ENCODE measurements at regions of chr13 and their contacts with region 1.

Region 1: GRCh38 chr13:110915057-110915873 is at the start of gene ANKRD10:
- DNase-seq: peak; percentile 84 to 95 (median 92)
- ATAC-seq: peak; percentile 73
- H3K4me3 ChIP-seq: peak within 1 kb of the TSS; percentile 90 to 92
- H3K4me3 Mint-ChIP-seq: peak within 1 kb of the TSS; percentile 92
- H3K27ac ChIP-seq: peak within 1 kb of the TSS; percentile 85 to 89
- H3K27ac Mint-ChIP-seq: peak within 1 kb of the TSS; percentile 93
- H3K4me1 ChIP-seq: peaks cover 29% of the 10 kb centered on the region
- H3K4me1 Mint-ChIP-seq: peaks cover 46% of the 10 kb centered on the region
- H3K27me3 ChIP-seq: no peaks in the 10 kb centered on the region
- H3K27me3 Mint-ChIP-seq: no peaks in the 10 kb centered on the region
- CTCF ChIP-seq: peak; percentile 74
- total RNA-seq, gene ANKRD10: 71.5 to 75.0 TPM

Region 2: GRCh38 chr13:109786457-109787134 is 1128.7 kb before region 1 on chr13 and contains the start of gene IRS2:
- CTCF ChIA-PET with region 1: no interaction called
- POLR2A ChIA-PET with region 1: no interaction called
- intact Hi-C with region 1: loop called in 1 of 2 experiments (anchors 5 kb)
- DNase-seq: peak; percentile 84 to 95 (median 93)
- ATAC-seq: peak; percentile 84
- H3K4me3 ChIP-seq: peak within 1 kb of the TSS; percentile 45 to 76
- H3K4me3 Mint-ChIP-seq: peak within 1 kb of the TSS; percentile 87
- H3K27ac ChIP-seq: peak within 1 kb of the TSS in 1 of 2 experiments; percentile 63
- H3K27ac Mint-ChIP-seq: peak within 1 kb of the TSS; percentile 92
- H3K4me1 ChIP-seq: peaks cover 9% of the 10 kb centered on the region
- H3K4me1 Mint-ChIP-seq: peaks cover 24% of the 10 kb centered on the region
- H3K27me3 ChIP-seq: no peaks in the 10 kb centered on the region
- H3K27me3 Mint-ChIP-seq: no peaks in the 10 kb centered on the region
- CTCF ChIP-seq: no peak
- total RNA-seq, gene IRS2: 197 to 201 TPM

Region 3: GRCh38 chr13:110715395-110716235 is 199.7 kb before region 1 on chr13:
- CTCF ChIA-PET with region 1: no interaction called
- POLR2A ChIA-PET with region 1: interaction called, 27 read pairs
- intact Hi-C with region 1: loop called (anchors 1 kb)
- DNase-seq: peak; percentile 91 to 99 (median 95)
- ATAC-seq: peak; percentile 58
- H3K4me3 ChIP-seq: peak overlapping the region; percentile 68 to 100
- H3K4me3 Mint-ChIP-seq: peak overlapping the region; percentile 99
- H3K27ac ChIP-seq: peak overlapping the region; percentile 76 to 91
- H3K27ac Mint-ChIP-seq: peak overlapping the region; percentile 97
- H3K4me1 ChIP-seq: peaks cover 29% of the 10 kb centered on the region
- H3K4me1 Mint-ChIP-seq: peaks cover 34% of the 10 kb centered on the region
- H3K27me3 ChIP-seq: no peaks in the 10 kb centered on the region
- H3K27me3 Mint-ChIP-seq: no peaks in the 10 kb centered on the region
- CTCF ChIP-seq: no peak

Region 4: DNA sequence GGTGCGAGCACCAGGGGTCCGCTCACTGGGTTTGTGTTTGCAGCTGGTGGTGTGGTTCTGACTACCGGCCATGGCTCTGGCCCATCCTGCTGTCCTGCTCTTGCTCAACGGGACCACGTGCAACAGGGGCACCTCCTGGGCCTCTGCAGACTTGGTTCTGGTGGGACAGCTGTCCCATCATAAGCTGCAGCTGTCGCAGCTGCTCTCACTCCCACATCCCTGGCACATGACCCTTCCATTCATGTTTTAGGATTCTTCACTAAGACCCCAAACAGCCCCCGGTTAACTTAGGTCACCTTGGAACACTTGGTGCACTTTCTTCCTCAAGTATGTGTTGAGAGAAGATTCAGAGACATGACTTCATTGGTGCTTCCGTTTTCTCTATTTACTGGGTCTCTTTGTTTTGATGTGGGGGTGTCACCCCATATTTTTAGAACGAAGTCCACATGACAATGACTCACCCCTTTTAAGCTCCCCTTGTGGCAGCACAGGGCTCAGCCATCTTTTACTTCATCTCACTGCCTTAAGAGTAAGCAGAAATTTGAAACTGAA is 131.4 kb after region 1 on chr13:
- CTCF ChIA-PET with region 1: no interaction called
- POLR2A ChIA-PET with region 1: no interaction called
- intact Hi-C with region 1: loop called in 1 of 2 experiments (anchors 5 kb)
- DNase-seq: peak in 1 of 9 experiments; percentile 22
- ATAC-seq: peak; percentile 77
- H3K4me3 ChIP-seq: no peak overlapping the region
- H3K4me3 Mint-ChIP-seq: no peak overlapping the region
- H3K27ac ChIP-seq: no peak overlapping the region
- H3K27ac Mint-ChIP-seq: no peak overlapping the region
- H3K4me1 ChIP-seq: no peaks in the 10 kb centered on the region
- H3K4me1 Mint-ChIP-seq: peaks cover 6% of the 10 kb centered on the region
- H3K27me3 ChIP-seq: no peaks in the 10 kb centered on the region
- H3K27me3 Mint-ChIP-seq: peaks cover 12% of the 10 kb centered on the region
- CTCF ChIP-seq: no peak

Region 5: GRCh38 chr13:111216166-111216960 is 301.1 kb after region 1 on chr13:
- CTCF ChIA-PET with region 1: no interaction called
- POLR2A ChIA-PET with region 1: no interaction called
- intact Hi-C with region 1: loop called (anchors 5 to 10 kb)
- DNase-seq: peak; percentile 18 to 69 (median 46)
- ATAC-seq: peak; percentile 68
- H3K4me3 ChIP-seq: no peak overlapping the region
- H3K4me3 Mint-ChIP-seq: no peak overlapping the region
- H3K27ac ChIP-seq: no peak overlapping the region
- H3K27ac Mint-ChIP-seq: peak overlapping the region; percentile 60
- H3K4me1 ChIP-seq: no peaks in the 10 kb centered on the region
- H3K4me1 Mint-ChIP-seq: peaks cover 53% of the 10 kb centered on the region
- H3K27me3 ChIP-seq: no peaks in the 10 kb centered on the region
- H3K27me3 Mint-ChIP-seq: no peaks in the 10 kb centered on the region
- CTCF ChIP-seq: peak; percentile 39

Region 6: GRCh38 chr13:112587212-112587763 is 1672.0 kb after region 1 on chr13:
- CTCF ChIA-PET with region 1: no interaction called
- POLR2A ChIA-PET with region 1: no interaction called
- intact Hi-C with region 1: loop called (anchors 10 kb)
- DNase-seq: peak; percentile 9 to 81 (median 68)
- ATAC-seq: peak; percentile 70
- H3K4me3 ChIP-seq: peak overlapping the region; percentile 76 to 83
- H3K4me3 Mint-ChIP-seq: peak overlapping the region; percentile 96
- H3K27ac ChIP-seq: peak overlapping the region; percentile 57 to 58
- H3K27ac Mint-ChIP-seq: peak overlapping the region; percentile 89
- H3K4me1 ChIP-seq: peaks cover 18% of the 10 kb centered on the region
- H3K4me1 Mint-ChIP-seq: peaks cover 44% of the 10 kb centered on the region
- H3K27me3 ChIP-seq: no peaks in the 10 kb centered on the region
- H3K27me3 Mint-ChIP-seq: no peaks in the 10 kb centered on the region
- CTCF ChIP-seq: no peak

Measured in CD8-positive, alpha-beta T cell (primary cell).